MCF 10A (cell line): ENCODE measurements at regions of chr10 and their contacts with region 1.

Region 1: GRCh38 chr10:64041185-64041988 is 520.2 kb downstream of the REEP3 start:
- DNase-seq: peak; percentile 77
- H3K4me3 Mint-ChIP-seq: peak overlapping the region; percentile 50
- H3K27ac Mint-ChIP-seq: no peak overlapping the region
- H3K4me1 Mint-ChIP-seq: peaks cover 8% of the 10 kb centered on the region
- H3K27me3 Mint-ChIP-seq: no peaks in the 10 kb centered on the region
- CTCF ChIP-seq: peak; percentile 100

Region 2: GRCh38 chr10:63878428-63878827 is 163.0 kb before region 1 on chr10:
- CTCF ChIA-PET with region 1: no interaction called
- POLR2A ChIA-PET with region 1: no interaction called
- intact Hi-C with region 1: loop called (anchors 2 kb)
- DNase-seq: no peak
- H3K4me3 Mint-ChIP-seq: no peak overlapping the region
- H3K27ac Mint-ChIP-seq: no peak overlapping the region
- H3K4me1 Mint-ChIP-seq: no peaks in the 10 kb centered on the region
- H3K27me3 Mint-ChIP-seq: no peaks in the 10 kb centered on the region
- CTCF ChIP-seq: no peak

Region 3: GRCh38 chr10:64054392-64054791 is 13.0 kb after region 1 on chr10:
- CTCF ChIA-PET with region 1: interaction called, 35 read pairs
- POLR2A ChIA-PET with region 1: no interaction called
- intact Hi-C with region 1: no loop called
- DNase-seq: no peak
- H3K4me3 Mint-ChIP-seq: no peak overlapping the region
- H3K27ac Mint-ChIP-seq: no peak overlapping the region
- H3K4me1 Mint-ChIP-seq: no peaks in the 10 kb centered on the region
- H3K27me3 Mint-ChIP-seq: no peaks in the 10 kb centered on the region
- CTCF ChIP-seq: no peak

Region 4: DNA sequence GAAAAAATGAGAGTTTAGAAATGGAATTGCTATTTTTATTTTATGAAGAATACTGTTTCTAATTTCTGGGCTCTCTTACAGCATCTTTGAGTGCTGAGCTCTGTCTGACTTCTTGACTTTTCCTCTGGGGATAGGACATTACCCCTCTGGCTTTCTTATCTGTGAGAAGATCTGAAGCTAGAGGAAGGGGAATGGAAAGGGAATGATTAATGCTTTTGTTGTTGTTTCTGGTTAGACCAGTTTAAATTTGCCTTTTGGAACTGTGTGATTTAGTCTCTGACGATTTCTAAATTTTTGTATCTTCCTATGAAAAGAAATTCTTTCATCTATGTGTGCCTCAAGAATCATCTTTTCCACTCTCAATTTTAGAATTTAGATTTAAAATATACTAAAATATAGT is 291.2 kb after region 1 on chr10:
- CTCF ChIA-PET with region 1: no interaction called
- POLR2A ChIA-PET with region 1: no interaction called
- intact Hi-C with region 1: no loop called
- DNase-seq: no peak
- H3K4me3 Mint-ChIP-seq: no peak overlapping the region
- H3K27ac Mint-ChIP-seq: no peak overlapping the region
- H3K4me1 Mint-ChIP-seq: peaks cover 9% of the 10 kb centered on the region
- H3K27me3 Mint-ChIP-seq: no peaks in the 10 kb centered on the region
- CTCF ChIP-seq: no peak

Region 5: DNA sequence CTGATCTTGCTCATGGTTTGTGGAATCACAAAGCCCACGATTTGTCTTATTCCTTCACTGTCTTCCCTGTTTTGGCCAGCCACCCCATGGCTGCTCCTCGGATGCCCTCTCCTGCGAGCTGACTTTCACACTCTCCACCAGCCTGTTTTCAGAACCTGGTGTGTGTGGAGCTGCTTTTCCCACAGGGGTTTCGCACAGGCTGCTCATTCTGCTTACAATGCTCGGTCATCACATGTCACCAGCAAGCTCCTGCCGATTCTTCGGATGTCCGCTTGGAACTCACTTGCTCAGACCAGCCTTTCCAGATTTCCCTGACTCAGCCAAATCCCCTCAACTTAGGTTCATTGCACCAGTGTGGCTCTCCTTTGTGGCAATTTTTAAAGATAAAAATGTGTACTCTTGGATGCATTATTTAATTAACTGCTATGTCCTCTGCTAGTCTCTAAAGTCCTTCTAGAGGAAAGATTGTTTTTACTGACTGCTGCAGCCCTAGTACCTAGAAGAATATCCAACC is 1865.9 kb after region 1 on chr10:
- CTCF ChIA-PET with region 1: no interaction called
- POLR2A ChIA-PET with region 1: no interaction called
- intact Hi-C with region 1: loop called (anchors 10 kb)
- DNase-seq: no peak
- H3K4me3 Mint-ChIP-seq: no peak overlapping the region
- H3K27ac Mint-ChIP-seq: no peak overlapping the region
- H3K4me1 Mint-ChIP-seq: peaks cover 4% of the 10 kb centered on the region
- H3K27me3 Mint-ChIP-seq: no peaks in the 10 kb centered on the region
- CTCF ChIP-seq: no peak